CD4-positive, alpha-beta T cell (primary cell): ENCODE measurements at regions of chr3 and their contacts with region 1.

Region 1: GRCh38 chr3:51243924-51244323 is 141.2 kb upstream of the MANF start:
- DNase-seq: peak in 1 of 14 experiments; percentile 3
- ATAC-seq: no peak
- H3K4me3 ChIP-seq: no peak overlapping the region
- H3K4me3 Mint-ChIP-seq: no peak overlapping the region
- H3K27ac ChIP-seq: no peak overlapping the region
- H3K27ac Mint-ChIP-seq: no peak overlapping the region
- H3K4me1 ChIP-seq: no peaks in the 10 kb centered on the region
- H3K4me1 Mint-ChIP-seq: no peaks in the 10 kb centered on the region
- H3K27me3 ChIP-seq: no peaks in the 10 kb centered on the region
- H3K27me3 Mint-ChIP-seq: no peaks in the 10 kb centered on the region
- CTCF ChIP-seq: no peak

Region 2: GRCh38 chr3:51198477-51198876 is 45.4 kb before region 1 on chr3:
- CTCF ChIA-PET with region 1: no interaction called
- POLR2A ChIA-PET with region 1: no interaction called
- intact Hi-C with region 1: loop called in 1 of 2 experiments (anchors 2 kb)
- DNase-seq: no peak
- ATAC-seq: no peak
- H3K4me3 ChIP-seq: no peak overlapping the region
- H3K4me3 Mint-ChIP-seq: no peak overlapping the region
- H3K27ac ChIP-seq: no peak overlapping the region
- H3K27ac Mint-ChIP-seq: no peak overlapping the region
- H3K4me1 ChIP-seq: no peaks in the 10 kb centered on the region
- H3K4me1 Mint-ChIP-seq: peaks cover 7% of the 10 kb centered on the region
- H3K27me3 ChIP-seq: no peaks in the 10 kb centered on the region
- H3K27me3 Mint-ChIP-seq: no peaks in the 10 kb centered on the region
- CTCF ChIP-seq: no peak

Region 3: GRCh38 chr3:51257870-51258269 is 13.9 kb after region 1 on chr3:
- CTCF ChIA-PET with region 1: no interaction called
- POLR2A ChIA-PET with region 1: no interaction called
- intact Hi-C with region 1: no loop called
- DNase-seq: peak in 2 of 14 experiments; percentile 25
- ATAC-seq: no peak
- H3K4me3 ChIP-seq: no peak overlapping the region
- H3K4me3 Mint-ChIP-seq: no peak overlapping the region
- H3K27ac ChIP-seq: no peak overlapping the region
- H3K27ac Mint-ChIP-seq: no peak overlapping the region
- H3K4me1 ChIP-seq: no peaks in the 10 kb centered on the region
- H3K4me1 Mint-ChIP-seq: no peaks in the 10 kb centered on the region
- H3K27me3 ChIP-seq: no peaks in the 10 kb centered on the region
- H3K27me3 Mint-ChIP-seq: peaks cover 8% of the 10 kb centered on the region
- CTCF ChIP-seq: no peak

Region 4: DNA sequence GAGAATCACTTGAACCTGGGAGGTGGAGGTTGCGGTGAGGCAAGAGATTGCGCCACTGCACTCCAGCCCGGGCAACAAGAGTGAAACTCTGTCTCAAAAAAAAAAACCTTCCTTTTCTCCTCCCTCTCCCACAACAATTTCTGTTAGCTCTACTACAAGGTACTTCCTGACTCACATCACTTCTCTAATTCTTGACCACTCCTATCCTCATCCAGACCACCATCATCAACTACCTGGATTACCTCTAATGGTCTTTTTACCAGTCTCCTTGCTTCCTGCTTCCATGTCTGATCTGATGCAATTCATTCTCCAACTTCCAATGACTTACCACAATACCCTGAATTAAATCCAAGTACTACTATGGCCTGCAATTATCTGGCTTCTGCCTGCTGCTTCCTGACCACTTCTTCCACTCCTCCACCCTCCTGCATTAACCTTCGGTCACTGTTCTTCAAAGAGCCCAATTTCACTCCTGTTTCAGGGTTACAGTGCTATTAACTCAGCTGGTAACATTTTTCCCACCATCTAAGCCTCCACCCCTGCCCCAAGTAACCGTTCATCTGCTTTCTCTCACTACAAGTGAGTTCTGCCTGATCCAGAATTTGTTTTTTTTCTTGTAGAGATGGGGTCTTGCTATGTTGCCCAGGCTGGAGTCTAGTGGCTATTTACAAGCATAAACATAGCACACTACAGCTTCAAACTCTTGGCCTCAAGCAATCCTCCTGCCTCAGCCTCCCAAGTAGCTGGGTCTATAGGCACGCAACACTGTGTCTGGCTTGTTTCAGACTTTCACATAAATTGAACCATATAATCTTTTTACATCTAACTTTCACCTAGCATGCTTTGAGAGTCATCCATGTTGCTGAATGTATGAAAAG is 228.1 kb after region 1 on chr3:
- CTCF ChIA-PET with region 1: no interaction called
- POLR2A ChIA-PET with region 1: no interaction called
- intact Hi-C with region 1: no loop called
- DNase-seq: no peak
- ATAC-seq: no peak
- H3K4me3 ChIP-seq: no peak overlapping the region
- H3K4me3 Mint-ChIP-seq: no peak overlapping the region
- H3K27ac ChIP-seq: no peak overlapping the region
- H3K27ac Mint-ChIP-seq: no peak overlapping the region
- H3K4me1 ChIP-seq: no peaks in the 10 kb centered on the region
- H3K4me1 Mint-ChIP-seq: no peaks in the 10 kb centered on the region
- H3K27me3 ChIP-seq: no peaks in the 10 kb centered on the region
- H3K27me3 Mint-ChIP-seq: no peaks in the 10 kb centered on the region
- CTCF ChIP-seq: no peak